Psoas muscle (tissue), 8 donors: ENCODE measurements at regions of chr9 and their contacts with region 1.

Region 1: DNA sequence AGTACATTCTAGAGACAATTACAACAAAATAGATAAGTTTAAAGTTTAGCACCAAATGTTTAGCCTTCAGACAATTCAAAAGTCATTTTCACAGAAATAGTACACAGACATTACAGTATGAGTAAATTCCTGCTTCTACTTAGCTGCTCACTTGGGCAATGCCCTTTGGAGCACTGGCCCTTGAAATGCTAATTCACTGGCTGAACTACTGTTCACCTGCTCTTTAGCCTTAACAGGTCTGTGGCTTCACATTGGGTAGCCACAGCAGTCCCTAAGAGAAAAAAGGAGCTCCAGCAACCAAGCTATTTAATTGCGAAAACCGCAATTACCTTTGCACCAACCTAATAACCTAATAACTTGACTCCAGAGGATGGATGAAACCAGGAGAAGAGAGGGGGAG is 916.2 kb upstream of the DMAC1 start:
- DNase-seq: no peak
- ATAC-seq: no peak
- H3K4me3 ChIP-seq: no peak overlapping the region
- H3K27ac ChIP-seq: no peak overlapping the region
- H3K4me1 ChIP-seq: no peaks in the 10 kb centered on the region
- H3K27me3 ChIP-seq: no peaks in the 10 kb centered on the region
- CTCF ChIP-seq: no peak

Region 2: GRCh38 chr9:8633784-8634183 is 82.0 kb before region 1 on chr9:
- intact Hi-C with region 1: no loop called
- DNase-seq: no peak
- ATAC-seq: no peak
- H3K4me3 ChIP-seq: no peak overlapping the region
- H3K27ac ChIP-seq: no peak overlapping the region
- H3K4me1 ChIP-seq: no peaks in the 10 kb centered on the region
- H3K27me3 ChIP-seq: no peaks in the 10 kb centered on the region
- CTCF ChIP-seq: no peak

Region 3: DNA sequence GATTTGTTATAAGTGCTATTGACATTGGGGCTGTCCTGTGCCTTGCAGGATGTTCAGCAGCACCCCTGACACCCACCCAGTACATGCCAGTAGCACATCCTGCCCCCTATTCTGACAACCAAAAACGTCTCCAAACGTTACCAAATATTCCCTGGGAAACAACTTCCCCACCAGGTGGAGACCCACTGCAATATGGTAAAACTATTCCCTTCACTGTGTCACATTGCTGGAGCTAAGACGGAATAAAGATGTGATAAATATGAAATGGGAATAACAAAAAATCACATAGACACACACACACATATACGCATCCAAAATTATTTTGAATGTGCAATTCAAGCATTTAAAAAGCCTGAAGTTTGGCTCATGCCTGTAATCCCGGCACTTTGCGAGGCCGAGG is 42.0 kb before region 1 on chr9:
- intact Hi-C with region 1: no loop called
- DNase-seq: no peak
- ATAC-seq: no peak
- H3K4me3 ChIP-seq: no peak overlapping the region
- H3K27ac ChIP-seq: no peak overlapping the region
- H3K4me1 ChIP-seq: no peaks in the 10 kb centered on the region
- H3K27me3 ChIP-seq: no peaks in the 10 kb centered on the region
- CTCF ChIP-seq: no peak

Region 4: DNA sequence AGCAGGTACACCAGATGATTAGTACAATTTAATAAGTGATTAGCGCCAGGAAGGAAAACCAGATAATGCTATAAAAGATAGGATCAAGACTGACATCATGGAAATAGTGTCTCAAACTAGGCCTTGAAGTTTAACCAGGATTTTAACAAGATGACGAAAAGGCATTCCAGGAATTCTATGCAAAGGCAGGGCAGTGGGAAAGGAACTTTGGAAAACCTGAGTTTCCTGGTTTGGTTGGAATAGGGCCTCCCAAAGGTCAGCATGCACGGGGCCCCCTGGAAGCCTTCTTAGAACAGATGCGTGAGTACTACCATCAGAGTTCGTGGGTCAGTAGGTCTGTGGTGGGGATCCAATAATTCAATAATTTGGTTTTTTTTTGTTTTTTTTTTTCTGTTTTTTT is 19.0 kb after region 1 on chr9:
- intact Hi-C with region 1: loop called in 1 of 2 experiments (anchors 1 kb)
- DNase-seq: no peak
- ATAC-seq: no peak
- H3K4me3 ChIP-seq: no peak overlapping the region
- H3K27ac ChIP-seq: no peak overlapping the region
- H3K4me1 ChIP-seq: no peaks in the 10 kb centered on the region
- H3K27me3 ChIP-seq: peaks cover 0 to 2% (median 0%) of the 10 kb centered on the region in 3 donors
- CTCF ChIP-seq: no peak